A673 (cell line): ENCODE measurements at regions of chr15 and their contacts with region 1.

Region 1: GRCh38 chr15:90071208-90071807 is 31.0 kb downstream of the IDH2 start:
- DNase-seq: peak; percentile 88
- H3K4me3 ChIP-seq: no peak overlapping the region
- H3K27ac ChIP-seq: no peak overlapping the region
- H3K4me1 ChIP-seq: no peaks in the 10 kb centered on the region
- H3K27me3 ChIP-seq: no peaks in the 10 kb centered on the region
- CTCF ChIP-seq: peak; percentile 84

Region 2: DNA sequence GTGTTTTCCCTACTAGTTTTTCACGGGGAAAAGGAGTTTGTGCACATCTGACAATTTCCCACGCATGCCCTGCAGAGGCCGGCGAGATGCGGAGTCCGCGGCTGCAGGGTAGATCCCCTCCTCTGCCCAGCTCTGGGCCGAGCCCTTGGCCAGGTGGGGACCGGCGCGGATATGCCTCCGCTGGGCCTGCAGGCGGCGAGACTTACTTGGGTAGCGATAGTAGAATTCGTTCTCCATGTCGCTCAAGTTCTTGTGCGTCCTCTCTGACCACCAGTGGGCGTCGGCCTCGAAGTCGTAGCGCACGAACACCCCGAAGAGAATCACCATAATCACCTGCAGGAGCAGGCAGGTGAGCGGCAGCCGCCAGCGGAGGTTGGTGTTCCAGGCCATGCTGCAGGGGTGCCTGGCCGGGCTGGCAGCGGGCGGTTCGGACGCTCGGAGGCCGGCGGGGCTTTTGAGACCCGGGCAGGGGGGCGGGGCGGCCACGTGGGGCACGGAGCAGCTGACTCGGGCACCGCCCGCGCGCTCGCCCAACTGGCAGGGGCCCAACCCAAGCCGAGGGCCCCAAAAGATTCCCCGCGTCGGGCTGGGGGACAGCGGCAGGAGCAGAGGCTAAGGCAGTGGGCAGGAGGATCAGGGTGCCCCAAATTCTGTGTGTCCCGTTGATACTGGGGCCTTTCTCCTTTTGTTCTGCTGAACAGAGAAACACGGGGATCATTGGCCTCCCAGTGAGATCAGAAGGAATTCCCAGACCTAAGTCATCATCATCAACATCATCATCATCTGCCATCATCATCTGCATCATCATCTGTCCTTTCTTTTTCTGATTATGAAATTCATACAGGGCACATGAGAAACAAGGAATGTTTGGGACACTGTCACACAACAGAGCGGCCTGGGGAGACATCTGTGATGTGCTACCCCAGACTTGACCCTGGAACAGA is 574.9 kb before region 1 on chr15 and contains the start of gene RHCG:
- CTCF ChIA-PET with region 1: interaction called, 10 read pairs
- POLR2A ChIA-PET with region 1: no interaction called
- intact Hi-C with region 1: no loop called
- DNase-seq: peak; percentile 56
- H3K4me3 ChIP-seq: peak within 1 kb of the TSS; percentile 44
- H3K27ac ChIP-seq: no peak within 1 kb of the TSS
- H3K4me1 ChIP-seq: no peaks in the 10 kb centered on the region
- H3K27me3 ChIP-seq: peaks cover 9% of the 10 kb centered on the region
- CTCF ChIP-seq: peak; percentile 58
- total RNA-seq, gene RHCG: 1.2 and 1.4 TPM in 2 replicates

Region 3: DNA sequence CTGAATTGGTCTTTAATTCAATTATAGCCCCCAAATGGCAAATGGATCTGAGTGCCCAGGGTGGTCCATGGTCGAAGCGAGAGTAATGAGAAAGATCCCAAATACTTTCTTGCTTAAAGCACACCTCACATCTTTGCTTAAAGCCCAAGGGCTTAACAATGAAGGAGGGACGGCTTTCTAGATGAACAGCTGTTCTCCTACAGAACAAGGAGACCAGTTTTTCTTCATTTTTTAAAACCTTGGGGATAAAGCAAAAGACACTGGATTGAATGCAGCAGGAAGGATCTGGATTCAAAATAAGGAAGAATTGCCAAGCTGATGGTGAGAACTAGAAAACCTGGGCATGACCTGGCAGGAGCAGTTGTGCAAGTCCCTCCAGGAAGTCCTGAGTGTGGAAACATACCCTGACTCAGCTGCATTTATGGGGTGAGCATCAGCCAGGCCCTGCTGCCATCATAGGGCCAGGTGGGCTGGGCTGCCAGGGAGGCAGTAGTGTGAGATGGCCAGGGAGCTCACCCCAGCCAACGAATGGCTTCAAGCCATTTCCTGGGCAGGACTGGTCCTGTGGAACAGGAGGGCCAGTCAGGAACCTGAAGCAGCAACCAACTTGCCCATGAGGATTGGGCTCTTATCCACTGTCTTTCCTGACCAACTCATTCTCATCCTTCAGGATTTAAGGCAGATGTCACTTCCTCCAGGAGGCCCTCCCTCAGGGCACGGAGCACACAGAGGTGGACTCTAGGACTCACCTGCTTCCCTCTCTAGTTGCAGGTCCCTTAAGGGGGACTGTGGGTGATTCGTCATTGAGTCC is 556.5 kb before region 1 on chr15:
- CTCF ChIA-PET with region 1: no interaction called
- POLR2A ChIA-PET with region 1: no interaction called
- intact Hi-C with region 1: no loop called
- DNase-seq: no peak
- H3K4me3 ChIP-seq: no peak overlapping the region
- H3K27ac ChIP-seq: no peak overlapping the region
- H3K4me1 ChIP-seq: no peaks in the 10 kb centered on the region
- H3K27me3 ChIP-seq: no peaks in the 10 kb centered on the region
- CTCF ChIP-seq: no peak

Region 4: GRCh38 chr15:89898614-89899294 is 172.6 kb before region 1 on chr15:
- CTCF ChIA-PET with region 1: no interaction called
- POLR2A ChIA-PET with region 1: no interaction called
- intact Hi-C with region 1: loop called (anchors 2 kb)
- DNase-seq: peak; percentile 55
- H3K4me3 ChIP-seq: no peak overlapping the region
- H3K27ac ChIP-seq: no peak overlapping the region
- H3K4me1 ChIP-seq: no peaks in the 10 kb centered on the region
- H3K27me3 ChIP-seq: no peaks in the 10 kb centered on the region
- CTCF ChIP-seq: peak; percentile 54

Region 5: GRCh38 chr15:90001683-90002427 is 69.5 kb before region 1 on chr15:
- CTCF ChIA-PET with region 1: interaction called, 6 read pairs
- POLR2A ChIA-PET with region 1: no interaction called
- intact Hi-C with region 1: loop called (anchors 2 kb)
- DNase-seq: peak; percentile 75
- H3K4me3 ChIP-seq: peak overlapping the region; percentile 81
- H3K27ac ChIP-seq: peak overlapping the region; percentile 87
- H3K4me1 ChIP-seq: peaks cover 19% of the 10 kb centered on the region
- H3K27me3 ChIP-seq: no peaks in the 10 kb centered on the region
- CTCF ChIP-seq: no peak